SK-N-SH (cell line): ENCODE measurements at regions of chr6 and their contacts with region 1.

Region 1: DNA sequence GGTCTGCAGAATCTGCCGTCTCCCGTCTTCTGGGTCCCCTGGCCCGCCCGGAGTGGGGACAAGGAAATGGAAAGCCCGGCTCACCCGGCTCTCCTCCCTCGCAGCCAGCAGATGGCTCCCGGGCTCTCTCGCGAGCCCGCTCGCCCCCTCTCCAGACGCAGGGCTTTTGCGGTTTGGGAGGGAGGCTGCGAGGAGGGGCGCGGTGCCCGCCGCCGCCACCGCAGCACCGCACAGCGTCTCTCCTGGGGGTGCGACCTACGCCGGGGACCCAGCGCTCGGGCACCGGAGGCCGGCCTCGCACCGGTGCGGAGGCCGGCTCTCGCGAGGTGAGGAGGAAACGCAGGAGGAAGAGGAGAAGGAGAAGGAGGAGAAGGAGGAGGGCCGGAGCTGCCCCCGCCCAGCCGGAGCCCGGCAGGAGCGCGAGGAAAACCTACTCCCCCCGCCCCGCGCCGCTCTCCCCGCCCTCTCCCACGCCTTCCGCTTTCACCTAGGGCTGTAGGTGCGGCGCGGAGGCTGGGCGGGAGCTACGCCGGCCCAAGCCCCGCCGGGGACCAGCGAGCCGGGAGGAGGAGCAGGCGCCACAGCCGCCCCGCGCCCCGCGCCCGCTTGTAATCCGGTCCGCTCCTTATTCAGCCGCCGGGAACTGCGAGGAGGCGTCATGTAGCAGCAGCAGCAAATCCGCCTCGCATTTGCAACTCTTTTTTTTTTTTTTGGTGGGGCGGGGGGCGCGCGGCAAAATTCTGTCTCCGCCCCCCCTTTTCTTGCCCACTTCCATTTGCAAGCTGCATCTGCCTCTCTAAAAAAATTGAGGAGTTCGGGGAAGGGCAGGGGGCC is at the start of gene CARMIL1:
- DNase-seq: peak; percentile 94
- H3K4me3 ChIP-seq: peak within 1 kb of the TSS; percentile 82 to 95
- H3K27ac ChIP-seq: peak within 1 kb of the TSS; percentile 41 to 60; a peak in 2 of 4 replicates
- H3K4me1 ChIP-seq: peaks cover 0 to 14% of the 10 kb centered on the region in 2 experiments; a peak in 2 of 4 replicates
- H3K27me3 ChIP-seq: no peaks in the 10 kb centered on the region
- CTCF ChIP-seq: peak; percentile 73
- EP300 ChIP-seq: no peak; a peak in 1 of 4 replicates
- RAD21 ChIP-seq: peak; percentile 83
- polyA plus RNA-seq, gene CARMIL1: 1.7 TPM in 2 replicates

Region 2: DNA sequence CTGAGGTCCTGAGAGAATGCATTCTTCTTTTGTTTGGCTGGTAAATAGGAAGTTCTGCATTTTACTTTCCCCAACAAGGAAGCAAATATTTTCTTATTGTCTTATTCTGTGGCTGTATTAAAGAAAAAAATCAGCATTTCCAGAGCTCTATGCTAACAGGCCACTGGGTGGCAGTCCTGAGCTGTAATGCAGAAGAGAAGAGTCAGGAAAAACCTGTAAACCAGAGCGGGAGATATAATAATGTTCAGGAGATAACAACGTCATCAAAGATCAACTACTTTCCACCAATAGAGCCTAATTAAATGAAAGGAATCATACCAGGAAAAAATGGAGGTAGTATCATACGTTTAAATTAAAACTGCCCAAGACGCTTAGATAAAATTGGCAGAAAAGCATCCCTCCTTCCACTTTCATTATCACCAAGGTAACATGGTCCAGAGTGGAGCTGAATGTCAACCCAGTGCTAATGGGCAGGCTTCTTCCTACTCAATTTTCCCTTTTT is 55.6 kb before region 1 on chr6:
- CTCF ChIA-PET with region 1: interaction called, 10 read pairs
- POLR2A ChIA-PET with region 1: interaction called, 3 read pairs
- DNase-seq: peak; percentile 64
- H3K4me3 ChIP-seq: peak overlapping the region; percentile 21 to 39
- H3K27ac ChIP-seq: peak overlapping the region in 1 of 2 experiments; percentile 39; a peak in 1 of 4 replicates
- H3K4me1 ChIP-seq: peaks cover 3 to 29% of the 10 kb centered on the region in 2 experiments; a peak in 3 of 4 replicates
- H3K27me3 ChIP-seq: no peaks in the 10 kb centered on the region
- CTCF ChIP-seq: peak; percentile 99
- EP300 ChIP-seq: no peak
- RAD21 ChIP-seq: peak; percentile 95

Region 3: GRCh38 chr6:25297039-25297441 is 17.9 kb after region 1 on chr6:
- CTCF ChIA-PET with region 1: interaction called, 12 read pairs
- POLR2A ChIA-PET with region 1: no interaction called
- DNase-seq: no peak
- H3K4me3 ChIP-seq: no peak overlapping the region
- H3K27ac ChIP-seq: no peak overlapping the region
- H3K4me1 ChIP-seq: peaks cover 0 to 7% of the 10 kb centered on the region in 2 experiments; a peak in 1 of 4 replicates
- H3K27me3 ChIP-seq: no peaks in the 10 kb centered on the region
- CTCF ChIP-seq: no peak
- EP300 ChIP-seq: no peak
- RAD21 ChIP-seq: no peak

Region 4: GRCh38 chr6:25497383-25498040 is 218.4 kb after region 1 on chr6:
- CTCF ChIA-PET with region 1: interaction called, 151 read pairs
- POLR2A ChIA-PET with region 1: no interaction called
- DNase-seq: no peak
- H3K4me3 ChIP-seq: no peak overlapping the region
- H3K27ac ChIP-seq: no peak overlapping the region
- H3K4me1 ChIP-seq: no peaks in the 10 kb centered on the region; a peak in 2 of 4 replicates
- H3K27me3 ChIP-seq: no peaks in the 10 kb centered on the region
- CTCF ChIP-seq: no peak
- EP300 ChIP-seq: no peak
- RAD21 ChIP-seq: no peak

Region 5: GRCh38 chr6:25590986-25591385 is 311.9 kb after region 1 on chr6:
- CTCF ChIA-PET with region 1: interaction called, 14 read pairs
- POLR2A ChIA-PET with region 1: no interaction called
- DNase-seq: peak; percentile 25
- H3K4me3 ChIP-seq: no peak overlapping the region
- H3K27ac ChIP-seq: peak overlapping the region in 1 of 2 experiments; percentile 60; a peak in 2 of 4 replicates
- H3K4me1 ChIP-seq: peaks cover 0 to 10% of the 10 kb centered on the region in 2 experiments; a peak in 2 of 4 replicates
- H3K27me3 ChIP-seq: no peaks in the 10 kb centered on the region
- CTCF ChIP-seq: no peak
- EP300 ChIP-seq: no peak
- RAD21 ChIP-seq: no peak

Region 6: DNA sequence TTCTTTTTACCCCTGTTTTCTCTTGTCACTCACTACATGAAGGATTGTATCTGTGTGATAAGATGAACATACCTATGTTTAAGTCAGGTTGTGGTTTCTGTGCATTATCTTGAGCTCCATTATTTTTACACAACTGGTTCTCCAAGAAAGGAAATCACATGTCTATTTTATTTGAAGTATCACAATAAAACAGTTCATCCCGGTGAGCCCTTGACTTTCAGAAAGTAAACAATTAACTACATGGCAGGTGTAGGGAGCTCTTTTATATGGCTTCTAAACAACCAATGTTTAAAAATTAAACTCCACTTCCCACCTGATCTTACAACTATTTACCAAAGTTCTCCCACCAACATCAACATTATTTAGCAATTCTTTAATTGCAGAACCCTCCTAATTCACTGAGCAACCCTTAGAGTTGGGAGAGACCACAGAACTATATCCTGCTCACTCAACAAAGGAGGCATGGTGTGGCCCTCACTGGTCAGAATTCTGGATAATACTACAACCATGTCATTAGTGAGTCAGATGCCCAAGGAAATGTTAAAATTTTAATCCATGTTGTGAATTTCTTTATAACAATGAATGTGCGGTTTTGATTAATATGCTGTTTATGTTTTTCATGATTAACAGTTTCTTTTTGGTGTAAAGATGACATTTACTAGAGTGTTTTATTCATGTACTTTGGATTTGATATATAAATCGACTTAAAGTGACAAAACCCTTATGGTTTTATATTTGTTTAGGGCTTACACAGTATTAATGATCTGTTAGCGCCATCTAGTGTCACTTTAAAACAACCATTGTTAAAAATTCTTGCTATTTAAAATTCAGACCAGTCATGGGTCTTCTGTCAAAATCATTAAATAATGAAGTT is 322.9 kb after region 1 on chr6:
- CTCF ChIA-PET with region 1: interaction called, 20 read pairs
- POLR2A ChIA-PET with region 1: no interaction called
- DNase-seq: peak; percentile 49
- H3K4me3 ChIP-seq: no peak overlapping the region; a peak in 1 of 4 replicates
- H3K27ac ChIP-seq: no peak overlapping the region
- H3K4me1 ChIP-seq: no peaks in the 10 kb centered on the region; a peak in 1 of 4 replicates
- H3K27me3 ChIP-seq: no peaks in the 10 kb centered on the region
- CTCF ChIP-seq: peak; percentile 80
- EP300 ChIP-seq: no peak
- RAD21 ChIP-seq: peak; percentile 85

Region 7: GRCh38 chr6:25717866-25718740 is 439.0 kb after region 1 on chr6:
- CTCF ChIA-PET with region 1: interaction called, 11 read pairs
- POLR2A ChIA-PET with region 1: no interaction called
- DNase-seq: peak; percentile 44
- H3K4me3 ChIP-seq: no peak overlapping the region
- H3K27ac ChIP-seq: no peak overlapping the region
- H3K4me1 ChIP-seq: peaks cover 0 to 10% of the 10 kb centered on the region in 2 experiments; a peak in 1 of 4 replicates
- H3K27me3 ChIP-seq: no peaks in the 10 kb centered on the region
- CTCF ChIP-seq: peak; percentile 79
- EP300 ChIP-seq: no peak
- RAD21 ChIP-seq: peak; percentile 72